ENCODE measurements at regions of chr15 and their contacts with region 1.

Region 1: DNA sequence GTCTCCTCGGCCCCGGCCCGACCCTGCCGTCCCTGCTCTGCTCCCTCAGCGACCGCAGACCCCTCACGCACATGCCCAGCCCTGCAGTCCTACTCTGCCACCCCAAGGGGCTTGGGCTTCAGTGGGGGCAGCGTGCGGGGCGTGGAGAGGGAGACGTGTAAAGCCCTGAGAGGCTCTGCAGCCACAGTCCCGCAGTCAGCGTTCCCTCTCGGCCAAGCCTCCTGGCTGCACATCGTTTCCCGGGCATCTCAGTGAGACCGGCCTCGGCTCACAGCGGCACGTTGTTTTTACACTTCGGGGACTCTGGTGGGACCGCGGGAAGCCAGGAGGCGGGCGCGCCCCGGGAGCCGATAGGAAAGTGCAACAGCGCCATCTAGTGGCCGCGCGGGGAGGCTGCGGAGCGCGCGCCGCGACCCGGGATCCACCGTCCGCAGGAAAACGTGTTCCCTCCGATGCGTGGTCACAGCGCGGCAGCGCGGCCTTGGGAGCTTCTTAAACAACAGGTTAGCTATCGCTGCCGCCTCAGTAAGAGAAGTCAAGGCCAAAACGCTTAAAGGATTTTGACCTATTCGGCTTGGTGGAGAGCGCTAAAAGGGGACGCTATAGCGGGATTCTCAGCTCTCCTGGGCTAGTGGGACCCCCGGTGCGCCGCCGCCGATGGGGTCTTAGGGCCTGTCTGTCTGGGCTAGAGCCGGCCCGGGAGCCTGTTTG is 226.8 kb upstream of the IGF1R start:
- DNase-seq: peak; percentile 61 to 84 (median 76)
- H3K4me3 ChIP-seq: peak overlapping the region; percentile 4
- H3K27ac ChIP-seq: no peak overlapping the region
- H3K4me1 ChIP-seq: peaks cover 3% of the 10 kb centered on the region
- H3K27me3 ChIP-seq: no peaks in the 10 kb centered on the region
- CTCF ChIP-seq: peak; percentile 88 to 95 (median 89)
- EP300 ChIP-seq: no peak
- POLR2A ChIP-seq: no peak

Region 2: DNA sequence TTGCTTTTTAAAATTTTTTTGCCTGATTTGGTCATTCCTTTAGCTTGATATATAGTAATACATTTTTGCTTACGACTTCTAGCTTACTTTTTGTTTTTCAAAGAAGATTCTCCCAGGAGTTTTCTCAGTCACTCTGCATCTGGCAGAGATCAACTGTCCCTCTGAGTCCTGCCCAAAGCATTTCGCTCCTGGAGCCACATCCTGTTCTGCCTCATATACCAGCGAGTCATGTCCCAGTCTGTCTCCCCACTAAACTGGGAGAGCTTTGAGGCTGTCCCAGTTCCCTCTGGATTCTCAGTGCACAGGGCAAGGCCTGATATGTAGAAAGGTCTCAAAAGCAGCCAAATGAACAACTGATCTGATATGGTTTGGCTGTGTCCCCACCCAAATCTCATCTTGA is 134.7 kb before region 1 on chr15:
- intact Hi-C with region 1: no loop called
- DNase-seq: no peak
- H3K4me3 ChIP-seq: no peak overlapping the region
- H3K27ac ChIP-seq: no peak overlapping the region
- H3K4me1 ChIP-seq: no peaks in the 10 kb centered on the region
- H3K27me3 ChIP-seq: no peaks in the 10 kb centered on the region
- CTCF ChIP-seq: no peak
- EP300 ChIP-seq: no peak
- POLR2A ChIP-seq: no peak

Region 3: GRCh38 chr15:98311566-98312188 is 109.9 kb before region 1 on chr15:
- intact Hi-C with region 1: loop called (anchors 2 to 5 kb)
- DNase-seq: peak; percentile 52 to 81 (median 65)
- H3K4me3 ChIP-seq: no peak overlapping the region
- H3K27ac ChIP-seq: no peak overlapping the region
- H3K4me1 ChIP-seq: no peaks in the 10 kb centered on the region
- H3K27me3 ChIP-seq: no peaks in the 10 kb centered on the region
- CTCF ChIP-seq: peak; percentile 38 to 72 (median 52)
- EP300 ChIP-seq: no peak
- POLR2A ChIP-seq: no peak